ENCODE measurements at regions of chr7 and their contacts with region 1.

Region 1: GRCh38 chr7:130010689-130011412 is 40.3 kb downstream of the ZC3HC1 start:
- DNase-seq: peak; percentile 54 to 84
- ATAC-seq: peak; percentile 71 to 81
- H3K4me3 ChIP-seq: no peak overlapping the region
- H3K27ac ChIP-seq: peak overlapping the region in 3 of 4 donors; percentile 50 to 76 (median 51)
- H3K4me1 ChIP-seq: peaks cover 0 to 19% of the 10 kb centered on the region in 2 donors
- H3K27me3 ChIP-seq: no peaks in the 10 kb centered on the region
- CTCF ChIP-seq: peak; percentile 83 to 95 (median 93)
- POLR2A ChIP-seq: no peak

Region 2: GRCh38 chr7:129367700-129368388 is 643.0 kb before region 1 on chr7:
- in situ Hi-C with region 1: loop called in 2 of 4 experiments (anchors 10 to 25 kb)
- intact Hi-C with region 1: loop called (anchors 5 kb)
- DNase-seq: peak; percentile 53 to 74
- ATAC-seq: peak; percentile 86 to 94
- H3K4me3 ChIP-seq: no peak overlapping the region
- H3K27ac ChIP-seq: peak overlapping the region in 3 of 4 donors; percentile 28 to 47 (median 28)
- H3K4me1 ChIP-seq: peaks cover 12 to 17% of the 10 kb centered on the region in 2 donors
- H3K27me3 ChIP-seq: no peaks in the 10 kb centered on the region
- CTCF ChIP-seq: peak; percentile 77 to 92 (median 88)
- POLR2A ChIP-seq: no peak

Region 3: GRCh38 chr7:129635300-129636029 is 375.4 kb before region 1 on chr7:
- in situ Hi-C with region 1: loop called in 1 of 4 experiments (anchors 25 kb)
- intact Hi-C with region 1: no loop called
- DNase-seq: peak; percentile 7 to 46
- ATAC-seq: peak; percentile 70 to 94
- H3K4me3 ChIP-seq: no peak overlapping the region
- H3K27ac ChIP-seq: no peak overlapping the region
- H3K4me1 ChIP-seq: peaks cover 9 to 10% of the 10 kb centered on the region in 2 donors
- H3K27me3 ChIP-seq: no peaks in the 10 kb centered on the region
- CTCF ChIP-seq: peak; percentile 33 to 80 (median 63)
- POLR2A ChIP-seq: no peak

Region 4: DNA sequence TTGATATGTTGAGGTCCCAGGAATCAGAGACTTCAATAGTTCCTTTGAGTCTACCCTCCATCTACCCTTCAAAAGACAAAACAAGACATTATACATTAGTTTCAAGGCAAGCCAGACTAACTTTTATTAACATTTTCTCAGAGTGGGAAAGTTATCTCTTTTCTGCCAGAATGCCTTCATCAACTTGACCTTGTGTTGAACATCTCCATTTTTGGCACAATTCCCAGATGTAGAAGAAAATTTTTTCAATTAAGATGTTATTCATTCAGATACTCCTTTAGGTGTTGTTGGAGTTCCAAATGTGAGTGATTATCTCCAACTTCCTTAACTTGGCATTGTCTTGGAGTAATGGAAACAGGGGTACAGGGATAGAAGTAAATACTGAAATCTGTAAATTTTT is 340.2 kb before region 1 on chr7:
- in situ Hi-C with region 1: loop called in 3 of 4 experiments (anchors 25 kb)
- intact Hi-C with region 1: loop called (anchors 10 kb)
- DNase-seq: no peak
- ATAC-seq: no peak
- H3K4me3 ChIP-seq: no peak overlapping the region
- H3K27ac ChIP-seq: no peak overlapping the region
- H3K4me1 ChIP-seq: no peaks in the 10 kb centered on the region
- H3K27me3 ChIP-seq: no peaks in the 10 kb centered on the region
- CTCF ChIP-seq: no peak
- POLR2A ChIP-seq: no peak

Region 5: GRCh38 chr7:129952653-129953560 is 57.9 kb before region 1 on chr7 and contains the start of gene UBE2H:
- in situ Hi-C with region 1: no loop called
- intact Hi-C with region 1: loop called (anchors 2 kb)
- DNase-seq: peak; percentile 88 to 90
- ATAC-seq: peak; percentile 71 to 76
- H3K4me3 ChIP-seq: peak within 1 kb of the TSS; percentile 81 to 97 (median 86)
- H3K27ac ChIP-seq: peak within 1 kb of the TSS; percentile 92 to 99 (median 99)
- H3K4me1 ChIP-seq: peaks cover 18 to 23% of the 10 kb centered on the region in 2 donors
- H3K27me3 ChIP-seq: no peaks in the 10 kb centered on the region
- CTCF ChIP-seq: peak in 2 of 5 experiments; percentile 8 to 25
- POLR2A ChIP-seq: peak; percentile 98 to 100
- total RNA-seq, gene UBE2H: 82.7 to 162 (median 103) TPM